Activated T-helper 1 cell treated with anti-CD3 and anti-CD28 coated beads, Interleukin-12 subunit alpha, Interleukin-12 subunit beta, Interleukin-2, Interleukin-4 antibody, amounts not matched to agents 30 ng/mL and 10 ng/mL and 1 ng/mL, durations not matched to agents 14 hours and 24 hours and 36 hours (primary cell): ENCODE measurements at regions of chr2 and their contacts with region 1.

Region 1: GRCh38 chr2:54558188-54559005 is 102.3 kb downstream of the SPTBN1 start:
- DNase-seq: peak; percentile 64
- H3K4me3 Mint-ChIP-seq: peak overlapping the region; percentile 90
- H3K27ac Mint-ChIP-seq: peak overlapping the region; percentile 88
- H3K4me1 Mint-ChIP-seq: peaks cover 89% of the 10 kb centered on the region
- H3K27me3 Mint-ChIP-seq: peaks cover 3% of the 10 kb centered on the region

Region 2: DNA sequence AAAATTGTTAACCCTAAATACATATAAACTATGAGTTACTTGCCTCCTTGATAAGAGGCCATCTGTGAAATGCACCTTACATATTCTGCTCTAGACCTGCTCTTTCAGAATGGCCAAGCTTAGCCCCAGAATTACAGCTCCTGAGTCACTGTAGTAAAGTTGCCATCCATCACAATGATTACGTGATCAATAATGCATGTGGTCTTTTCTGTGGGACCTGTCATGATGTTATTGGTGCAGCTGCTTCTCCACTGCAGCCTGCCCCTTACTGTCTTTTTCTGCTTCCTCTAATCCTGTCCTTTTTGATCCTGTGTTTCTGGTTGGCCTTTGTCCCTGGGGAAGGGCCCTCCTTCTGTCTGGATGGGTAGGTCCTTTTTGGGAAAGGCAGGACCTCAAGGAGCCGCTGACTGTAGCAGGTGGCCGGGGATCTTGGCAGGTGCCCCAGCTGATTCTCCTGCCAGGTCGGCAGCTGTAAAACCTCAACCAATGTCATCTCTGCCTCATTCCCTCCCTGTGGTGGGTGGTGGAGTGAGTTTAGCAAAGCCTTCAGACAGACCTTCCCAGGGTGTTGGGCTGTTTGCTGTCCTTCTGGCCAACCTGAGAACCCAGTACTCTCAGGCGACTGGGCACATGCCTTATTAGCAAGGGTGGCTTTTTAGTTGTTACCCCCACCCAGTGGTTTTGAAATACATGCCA is 38.9 kb after region 1 on chr2:
- intact Hi-C with region 1: loop called (anchors 1 kb)
- DNase-seq: no peak
- H3K4me3 Mint-ChIP-seq: peak overlapping the region; percentile 78
- H3K27ac Mint-ChIP-seq: peak overlapping the region; percentile 99
- H3K4me1 Mint-ChIP-seq: peaks cover 81% of the 10 kb centered on the region
- H3K27me3 Mint-ChIP-seq: no peaks in the 10 kb centered on the region

Region 3: GRCh38 chr2:54606393-54606969 is 48.1 kb after region 1 on chr2:
- intact Hi-C with region 1: loop called (anchors 1 kb)
- DNase-seq: no peak
- H3K4me3 Mint-ChIP-seq: peak overlapping the region; percentile 61
- H3K27ac Mint-ChIP-seq: peak overlapping the region; percentile 85
- H3K4me1 Mint-ChIP-seq: peaks cover 83% of the 10 kb centered on the region
- H3K27me3 Mint-ChIP-seq: no peaks in the 10 kb centered on the region

Region 4: DNA sequence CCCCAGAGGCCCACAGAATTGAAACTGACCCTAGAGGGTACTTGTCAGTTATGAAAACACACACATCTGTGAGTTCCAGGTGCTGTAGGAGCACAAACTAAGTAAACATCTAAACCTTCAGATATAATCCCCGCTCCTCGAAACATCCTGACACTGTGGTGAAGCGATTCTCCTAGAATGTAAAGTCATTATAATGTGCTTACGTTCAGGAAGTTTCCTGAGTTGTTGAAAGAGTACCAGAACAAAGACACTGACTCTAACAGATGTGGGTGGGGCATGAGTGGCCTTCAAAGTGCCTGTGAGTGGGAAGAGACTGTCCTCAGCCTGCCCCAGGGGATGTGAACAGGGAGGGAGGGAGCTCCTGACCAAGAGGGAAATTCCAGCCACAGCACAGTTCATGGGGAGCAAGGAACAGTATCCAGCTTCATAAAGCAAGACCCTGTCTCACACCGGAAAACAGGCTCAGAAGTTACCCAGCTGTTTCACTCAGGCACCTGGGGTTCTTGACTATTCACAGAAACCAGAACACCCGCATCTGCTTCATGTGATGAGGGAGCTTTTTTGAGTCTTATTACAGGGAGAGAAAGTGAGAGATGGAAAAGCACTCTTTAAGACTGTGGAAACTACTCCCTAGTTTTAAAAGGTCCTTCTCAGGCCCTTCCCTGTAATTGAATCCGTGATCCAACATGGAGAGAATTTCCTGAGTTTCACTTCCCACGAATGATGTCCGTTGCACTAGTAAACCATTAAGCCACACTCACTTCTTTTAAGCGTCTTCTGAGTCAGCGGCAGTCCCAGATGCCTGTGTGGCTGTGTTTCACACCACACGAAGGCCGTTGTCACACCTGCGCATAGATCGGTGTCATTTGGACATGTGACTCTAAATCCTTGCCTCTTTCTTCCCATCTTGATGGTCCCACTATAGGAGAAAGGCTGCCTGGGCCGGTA is 76.4 kb after region 1 on chr2:
- intact Hi-C with region 1: loop called (anchors 2 kb)
- DNase-seq: no peak
- H3K4me3 Mint-ChIP-seq: peak overlapping the region; percentile 54
- H3K27ac Mint-ChIP-seq: peak overlapping the region; percentile 52
- H3K4me1 Mint-ChIP-seq: peaks cover 47% of the 10 kb centered on the region
- H3K27me3 Mint-ChIP-seq: no peaks in the 10 kb centered on the region

Region 5: DNA sequence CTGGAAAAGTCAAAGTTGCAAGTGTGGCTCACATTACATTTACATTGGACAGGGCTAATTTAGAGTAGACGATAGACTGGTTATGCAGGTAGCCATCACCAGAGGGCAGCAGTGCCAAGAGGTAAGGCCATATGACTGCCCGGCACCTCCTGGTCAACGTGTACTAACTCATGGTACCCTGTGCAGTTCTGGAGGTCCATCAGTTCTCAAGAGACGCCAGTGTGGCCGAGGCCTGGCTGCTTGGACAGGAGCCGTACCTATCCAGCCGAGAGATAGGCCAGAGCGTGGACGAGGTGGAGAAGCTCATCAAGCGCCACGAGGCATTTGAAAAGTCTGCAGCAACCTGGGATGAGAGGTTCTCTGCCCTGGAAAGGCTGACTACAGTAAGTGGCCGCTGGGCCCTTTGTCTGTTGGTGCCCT is 99.3 kb after region 1 on chr2:
- intact Hi-C with region 1: loop called (anchors 1 kb)
- DNase-seq: no peak
- H3K4me3 Mint-ChIP-seq: no peak overlapping the region
- H3K27ac Mint-ChIP-seq: no peak overlapping the region
- H3K4me1 Mint-ChIP-seq: peaks cover 20% of the 10 kb centered on the region
- H3K27me3 Mint-ChIP-seq: no peaks in the 10 kb centered on the region

Region 6: DNA sequence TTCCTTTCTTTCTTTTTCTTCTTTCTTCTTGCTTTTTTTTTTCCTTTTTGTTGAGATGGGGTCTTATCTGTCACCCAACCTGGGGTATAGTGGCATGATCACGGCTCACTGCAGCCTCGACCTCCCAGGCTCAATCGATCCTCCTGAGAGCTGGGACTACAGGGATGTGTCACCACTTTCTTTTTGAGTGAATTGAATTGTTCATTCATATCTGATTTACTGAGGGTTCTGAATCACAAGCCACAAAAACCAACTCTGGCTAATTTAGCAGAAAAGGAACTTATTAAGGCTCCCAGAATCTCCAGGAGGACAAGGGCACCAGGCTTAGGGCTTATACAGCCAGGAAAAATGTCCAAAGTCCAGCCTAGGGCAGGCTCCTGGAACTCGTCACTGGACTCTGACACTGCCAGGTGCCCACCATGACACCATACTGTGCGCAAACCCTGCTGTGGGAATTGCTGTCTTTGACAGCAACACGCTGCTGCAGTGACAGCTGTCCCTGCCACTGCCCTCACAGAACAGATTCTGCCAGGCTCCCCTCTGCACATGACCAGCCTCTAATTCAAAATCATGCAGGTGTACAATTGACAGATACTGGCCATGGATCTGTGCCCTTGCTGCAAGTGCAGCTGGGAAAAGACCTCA is 122.1 kb after region 1 on chr2:
- intact Hi-C with region 1: loop called (anchors 1 kb)
- DNase-seq: peak; percentile 39
- H3K4me3 Mint-ChIP-seq: peak overlapping the region; percentile 78
- H3K27ac Mint-ChIP-seq: peak overlapping the region; percentile 65
- H3K4me1 Mint-ChIP-seq: peaks cover 59% of the 10 kb centered on the region
- H3K27me3 Mint-ChIP-seq: peaks cover 33% of the 10 kb centered on the region

Region 7: DNA sequence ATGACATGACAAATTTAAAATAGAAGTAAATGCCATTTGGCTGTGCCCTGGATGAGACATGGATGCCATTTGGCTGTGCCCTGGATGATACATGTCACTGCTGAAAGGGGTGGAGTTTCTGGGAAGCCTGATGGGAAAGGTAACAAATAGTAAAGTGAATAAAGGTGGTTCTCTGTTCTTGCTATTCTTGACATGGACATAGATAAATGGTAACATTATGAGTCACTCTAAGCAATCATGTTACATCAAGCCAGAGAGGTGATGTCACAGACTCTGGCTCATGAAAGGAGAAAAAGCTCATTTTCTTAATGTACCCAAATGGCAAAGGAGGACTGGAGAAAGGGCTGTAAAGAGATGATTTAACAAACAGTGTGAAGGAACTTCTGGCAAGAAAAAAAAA is 251.4 kb after region 1 on chr2:
- intact Hi-C with region 1: no loop called
- DNase-seq: no peak
- H3K4me3 Mint-ChIP-seq: no peak overlapping the region
- H3K27ac Mint-ChIP-seq: no peak overlapping the region
- H3K4me1 Mint-ChIP-seq: no peaks in the 10 kb centered on the region
- H3K27me3 Mint-ChIP-seq: peaks cover 14% of the 10 kb centered on the region

Region 8: DNA sequence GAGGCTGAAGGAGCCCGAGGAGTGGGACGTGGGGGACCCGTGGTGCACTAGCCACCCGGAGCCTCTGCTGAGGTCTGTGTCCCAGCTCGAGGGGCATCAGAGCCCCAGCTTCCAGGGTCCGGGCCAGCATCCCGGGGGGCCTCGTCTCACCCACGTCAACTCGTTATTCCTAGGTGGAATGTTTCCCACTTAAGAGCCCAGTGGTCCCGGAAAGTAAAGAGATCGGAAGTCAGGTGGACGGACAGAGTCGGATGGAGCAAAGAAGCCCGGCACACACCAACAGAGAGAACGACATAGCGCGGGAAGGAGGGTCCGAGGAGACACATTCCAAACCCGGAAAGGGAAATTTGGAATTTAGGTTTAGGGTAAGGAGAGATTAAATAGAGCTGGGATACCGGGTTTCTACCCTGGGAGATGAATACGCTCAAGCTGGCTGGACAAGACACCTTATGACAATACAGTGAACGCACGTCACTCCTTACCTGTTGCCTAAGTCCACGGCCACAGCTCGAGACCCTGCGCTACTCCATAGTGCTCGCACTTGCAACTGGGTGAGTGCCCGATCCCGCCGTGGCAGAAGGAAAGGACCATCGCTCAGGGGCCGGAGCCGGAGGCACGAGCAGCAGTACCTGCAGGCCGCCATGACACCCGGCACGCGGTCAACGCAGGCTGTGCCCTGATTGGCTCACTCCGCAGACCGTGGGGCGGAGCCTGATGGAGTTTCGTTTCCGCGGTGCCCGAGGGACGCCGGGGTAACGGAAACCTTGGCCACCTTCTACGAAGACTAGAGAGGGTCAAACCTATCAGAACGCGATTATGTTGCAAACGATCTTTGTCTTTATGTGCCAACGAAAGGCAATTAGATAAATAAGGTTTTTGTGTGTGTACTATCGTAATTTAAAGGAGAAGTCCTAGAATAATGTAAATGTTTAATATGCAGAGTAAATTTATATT is 1135.1 kb after region 1 on chr2 and contains the start of gene PNPT1:
- intact Hi-C with region 1: loop called (anchors 10 kb)
- DNase-seq: peak; percentile 92
- H3K4me3 Mint-ChIP-seq: peak within 1 kb of the TSS; percentile 98
- H3K27ac Mint-ChIP-seq: peak within 1 kb of the TSS; percentile 89
- H3K4me1 Mint-ChIP-seq: peaks cover 39% of the 10 kb centered on the region
- H3K27me3 Mint-ChIP-seq: peaks cover 2% of the 10 kb centered on the region
- total RNA-seq, gene PNPT1: 65.1 and 71.1 TPM in 2 replicates